Sigmoid colon (tissue), 7 donors: ENCODE measurements at regions of chr12 and their contacts with region 1.

Region 1: DNA sequence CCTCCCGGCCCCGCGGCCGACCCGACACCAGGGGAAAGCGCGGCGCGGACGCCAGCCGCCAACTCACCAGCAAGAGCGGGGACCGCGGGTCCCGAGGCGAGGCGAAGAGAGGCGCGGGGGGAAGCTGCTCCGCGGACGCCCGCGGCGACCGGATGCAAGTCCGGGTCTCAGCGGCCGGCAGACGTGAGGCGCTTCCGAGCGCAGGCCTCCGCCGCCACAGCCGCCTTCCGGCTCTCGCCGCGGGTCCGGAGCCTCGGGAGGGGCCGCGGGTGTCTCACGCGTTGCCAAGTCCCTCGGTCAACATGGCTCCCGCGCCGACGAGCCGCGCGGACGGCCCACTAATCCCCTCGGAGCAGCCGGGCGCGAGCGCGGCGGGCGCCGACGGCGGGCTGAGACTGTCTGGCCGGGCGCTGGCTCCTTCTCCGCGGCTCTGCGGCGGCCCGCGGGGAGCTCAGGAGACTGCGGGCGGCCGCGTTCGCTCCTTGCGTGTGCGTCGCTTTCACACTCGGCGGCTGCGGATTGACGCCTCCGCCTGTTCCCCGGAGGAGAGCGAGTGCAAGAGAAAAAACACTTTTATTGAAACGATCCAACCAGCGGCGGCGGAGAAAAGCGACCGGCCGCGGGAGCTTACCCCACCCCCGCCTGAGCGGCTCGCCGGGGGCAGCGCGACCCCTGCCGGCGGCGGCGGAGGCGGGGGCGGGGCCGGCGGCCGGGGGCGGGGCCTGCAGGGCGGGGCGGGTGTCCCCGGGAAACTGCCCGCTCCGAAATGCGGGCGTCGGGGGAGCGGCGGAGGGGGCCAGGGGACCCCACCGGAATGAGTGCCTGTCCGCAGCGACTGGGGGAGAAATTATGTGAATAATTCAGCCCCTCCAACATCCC is at the start of gene CDK17:
- DNase-seq: peak; percentile 94
- H3K4me3 ChIP-seq: peak within 1 kb of the TSS; percentile 76 to 96 (median 92)
- H3K27ac ChIP-seq: peak within 1 kb of the TSS; percentile 97 to 100 (median 99)
- H3K4me1 ChIP-seq: peaks cover 0 to 39% (median 23%) of the 10 kb centered on the region in 4 donors
- H3K27me3 ChIP-seq: no peaks in the 10 kb centered on the region
- CTCF ChIP-seq: no peak
- EP300 ChIP-seq: no peak
- POLR2A ChIP-seq: peak; percentile 45 to 67
- total RNA-seq, gene CDK17: 63.2 to 117 (median 82.0) TPM

Region 2: GRCh38 chr12:96061864-96062453 is 338.2 kb before region 1 on chr12:
- intact Hi-C with region 1: loop called (anchors 1 kb)
- DNase-seq: peak; percentile 81
- H3K4me3 ChIP-seq: no peak overlapping the region
- H3K27ac ChIP-seq: no peak overlapping the region
- H3K4me1 ChIP-seq: no peaks in the 10 kb centered on the region
- H3K27me3 ChIP-seq: no peaks in the 10 kb centered on the region
- CTCF ChIP-seq: peak; percentile 83 to 93 (median 86)
- EP300 ChIP-seq: no peak
- POLR2A ChIP-seq: no peak

Region 3: DNA sequence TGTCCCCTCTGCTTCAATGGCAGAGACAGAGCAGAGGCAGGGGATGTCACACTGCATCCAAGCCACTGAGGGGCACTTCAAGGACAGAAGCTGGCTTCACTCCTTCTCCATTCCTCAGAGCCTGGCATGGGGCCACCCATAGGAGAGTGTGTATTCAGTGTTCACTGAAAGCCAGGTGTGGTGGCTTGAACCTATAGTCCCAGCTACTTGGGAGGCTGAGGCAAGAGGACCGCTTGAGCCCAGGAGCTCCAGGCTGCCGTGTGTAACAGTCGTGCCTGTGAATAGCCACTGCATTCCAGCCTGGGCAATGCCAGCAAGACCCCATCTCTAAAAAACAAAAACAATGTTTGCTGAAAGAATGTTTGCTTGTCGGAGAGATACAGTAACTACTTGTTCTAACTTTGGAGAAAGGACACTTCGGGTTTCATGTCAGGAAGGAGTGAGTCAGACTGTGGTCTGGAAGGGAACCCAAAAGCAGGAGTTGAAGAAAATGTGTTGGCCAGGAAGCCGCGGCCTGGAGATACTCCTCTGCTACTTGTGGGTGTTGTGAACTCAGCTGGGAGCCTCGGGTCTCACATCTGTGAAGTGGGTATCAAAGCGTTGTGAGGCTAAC is 162.6 kb before region 1 on chr12:
- intact Hi-C with region 1: loop called (anchors 2 kb)
- DNase-seq: peak; percentile 93
- H3K4me3 ChIP-seq: no peak overlapping the region
- H3K27ac ChIP-seq: peak overlapping the region; percentile 92 to 97 (median 95)
- H3K4me1 ChIP-seq: peaks cover 0 to 99% (median 97%) of the 10 kb centered on the region in 4 donors
- H3K27me3 ChIP-seq: no peaks in the 10 kb centered on the region
- CTCF ChIP-seq: no peak
- EP300 ChIP-seq: peak in 3 of 4 donors; percentile 14 to 93 (median 79)
- POLR2A ChIP-seq: no peak

Region 4: DNA sequence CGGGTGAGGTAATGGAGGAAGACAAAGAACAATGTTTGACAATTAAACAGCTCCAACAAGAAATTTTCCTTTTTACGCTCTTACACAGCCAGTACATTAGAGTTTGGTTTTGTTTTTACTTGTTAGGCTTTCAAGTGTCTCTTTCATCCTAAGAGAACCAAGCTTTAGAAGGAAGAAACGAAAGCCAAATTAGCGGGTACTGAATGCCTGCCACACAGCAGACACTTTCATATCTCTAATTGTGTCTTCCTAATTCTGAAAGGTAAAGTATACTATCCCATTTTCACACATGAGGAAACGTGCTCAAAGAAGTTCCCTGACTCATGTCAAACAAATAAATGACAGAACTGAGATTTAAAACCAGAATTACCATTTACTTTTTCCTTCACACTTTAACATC is 64.9 kb before region 1 on chr12:
- intact Hi-C with region 1: no loop called
- DNase-seq: no peak
- H3K4me3 ChIP-seq: no peak overlapping the region
- H3K27ac ChIP-seq: no peak overlapping the region
- H3K4me1 ChIP-seq: peaks cover 0 to 31% (median 16%) of the 10 kb centered on the region in 4 donors
- H3K27me3 ChIP-seq: no peaks in the 10 kb centered on the region
- CTCF ChIP-seq: no peak
- EP300 ChIP-seq: no peak
- POLR2A ChIP-seq: no peak

Region 5: DNA sequence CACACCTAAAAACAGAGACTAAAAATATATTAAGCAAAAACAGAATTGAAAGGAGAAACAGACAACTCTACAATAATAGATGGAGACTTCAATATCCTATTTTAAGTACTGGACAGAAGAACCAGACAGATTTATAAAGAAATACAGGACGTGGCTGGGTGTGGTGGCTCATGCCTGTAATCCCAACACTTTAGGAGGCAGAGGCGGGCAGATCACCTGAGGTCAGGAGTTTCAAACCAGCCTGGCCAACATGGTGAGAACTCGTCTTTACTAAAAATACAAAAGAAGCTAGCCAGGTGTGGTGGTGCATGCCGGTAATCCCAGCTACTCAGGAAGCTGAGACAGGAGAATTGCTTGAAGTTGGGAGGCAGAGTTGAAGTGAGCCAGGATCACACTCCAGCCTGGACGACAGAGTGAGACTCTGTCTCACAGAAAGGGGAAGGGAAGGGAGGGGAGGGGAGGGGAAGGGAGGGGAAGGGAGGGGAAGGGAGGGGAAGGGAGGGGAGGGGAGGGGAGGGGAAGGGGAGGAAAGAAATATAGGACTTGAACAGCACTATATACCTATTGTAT is 52.9 kb before region 1 on chr12:
- intact Hi-C with region 1: loop called (anchors 5 kb)
- DNase-seq: no peak
- H3K4me3 ChIP-seq: peak overlapping the region; percentile 6 to 38 (median 34)
- H3K27ac ChIP-seq: peak overlapping the region; percentile 60 to 78 (median 74)
- H3K4me1 ChIP-seq: peaks cover 0 to 42% (median 24%) of the 10 kb centered on the region in 4 donors
- H3K27me3 ChIP-seq: no peaks in the 10 kb centered on the region
- CTCF ChIP-seq: no peak
- EP300 ChIP-seq: no peak
- POLR2A ChIP-seq: no peak

Region 6: DNA sequence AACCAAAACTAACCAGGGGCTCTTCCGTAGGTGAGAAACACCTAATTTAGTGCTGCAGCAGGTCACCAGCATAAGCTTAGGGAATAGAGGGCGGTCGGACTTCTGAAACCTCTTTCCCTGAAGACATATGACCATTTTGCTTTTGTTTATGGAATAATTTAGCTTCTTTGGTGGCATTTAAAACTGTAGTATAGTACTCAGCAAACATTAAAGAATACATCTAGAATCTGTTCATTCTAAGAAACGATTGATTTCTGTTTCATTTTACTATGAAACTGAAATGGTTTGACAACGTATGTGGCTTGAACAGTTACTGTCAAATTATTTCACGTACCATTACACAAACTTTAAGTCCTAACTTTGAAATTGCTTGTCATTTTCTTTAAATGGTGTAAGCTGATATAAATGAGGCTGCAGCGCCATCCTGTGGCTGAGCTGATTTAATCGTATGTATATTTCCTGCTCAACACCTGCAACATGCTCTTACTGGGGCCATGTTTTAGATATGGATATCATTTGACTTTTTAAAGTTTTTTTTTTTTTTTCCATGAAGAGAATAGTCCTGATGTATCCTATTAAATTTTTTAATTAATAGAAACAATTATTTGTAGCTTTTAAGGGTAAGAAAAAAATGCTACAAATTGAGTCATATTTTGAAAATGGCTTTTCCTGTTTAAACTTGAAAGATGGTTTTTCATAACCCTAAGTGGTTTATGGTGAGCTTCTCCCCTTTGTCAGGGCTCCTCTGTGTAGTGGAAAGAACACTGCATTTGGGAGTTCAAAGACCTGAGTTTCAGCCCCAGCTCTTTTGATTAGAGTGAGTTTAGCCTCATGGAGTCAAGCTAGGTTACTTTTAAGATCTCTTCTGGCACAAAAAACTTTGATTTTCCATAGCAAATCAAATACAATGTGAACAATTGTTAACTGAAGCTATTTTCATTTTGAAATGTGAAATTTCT is 116.6 kb after region 1 on chr12:
- intact Hi-C with region 1: loop called (anchors 2 kb)
- DNase-seq: peak; percentile 84
- H3K4me3 ChIP-seq: no peak overlapping the region
- H3K27ac ChIP-seq: no peak overlapping the region
- H3K4me1 ChIP-seq: peaks cover 0 to 22% (median 9%) of the 10 kb centered on the region in 4 donors
- H3K27me3 ChIP-seq: no peaks in the 10 kb centered on the region
- CTCF ChIP-seq: peak; percentile 46 to 79 (median 61)
- EP300 ChIP-seq: no peak
- POLR2A ChIP-seq: no peak